Activated T-helper 2 cell treated with anti-CD3 and anti-CD28 coated beads, Interferon-gamma antibody, Interleukin-2, Interleukin-4, amounts not matched to agents 10 μg/mL and 5 μg/mL and 100 μg/mL, durations not matched to agents 14 hours and 24 hours and 36 hours (primary cell): ENCODE measurements at regions of chr1 and their contacts with region 1.

Region 1: DNA sequence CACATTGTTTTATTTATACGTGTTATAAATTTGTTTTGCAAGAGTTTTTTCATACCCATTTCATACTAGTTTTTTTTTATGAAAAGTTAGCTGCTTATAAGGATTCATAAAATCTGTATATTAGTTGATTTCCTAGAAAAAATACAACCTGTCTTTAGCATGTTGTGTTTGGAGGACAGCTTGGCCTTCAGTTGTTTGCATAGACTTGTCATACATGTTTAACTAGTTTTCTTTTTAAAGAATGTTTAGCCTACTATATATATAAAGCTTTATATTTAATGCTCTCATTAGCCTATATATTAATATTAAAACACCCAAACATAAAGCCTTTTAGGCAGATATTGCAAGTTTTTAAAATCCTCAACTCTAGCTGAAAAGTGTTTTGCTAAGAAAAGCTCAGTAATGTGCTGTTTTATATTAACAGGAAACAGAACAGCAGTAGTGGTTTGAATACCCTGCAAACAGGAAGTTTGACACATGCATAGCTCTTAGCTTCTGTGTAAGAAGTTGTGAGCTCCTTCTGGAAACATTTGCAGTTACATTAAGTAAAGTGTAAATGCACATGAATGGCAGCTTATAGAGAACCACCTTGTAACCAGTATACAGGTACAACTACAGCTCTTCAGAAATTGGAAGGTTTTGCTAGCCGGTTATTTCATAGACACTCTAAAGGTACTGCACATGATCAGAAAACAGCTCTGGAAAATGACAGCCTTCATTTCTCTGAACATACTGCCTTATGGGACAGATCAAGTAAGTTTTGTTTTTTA is at the start of gene PRKACB:
- DNase-seq: no peak
- H3K4me3 Mint-ChIP-seq: peak within 1 kb of the TSS; percentile 95
- H3K27ac Mint-ChIP-seq: peak within 1 kb of the TSS; percentile 98
- H3K4me1 Mint-ChIP-seq: peaks cover 36% of the 10 kb centered on the region
- H3K27me3 Mint-ChIP-seq: no peaks in the 10 kb centered on the region
- total RNA-seq, gene PRKACB: 16.4 and 20.9 TPM in 2 replicates

Region 2: GRCh38 chr1:83998498-83999315 is 145.3 kb before region 1 on chr1 and contains the start of gene TTLL7:
- intact Hi-C with region 1: loop called (anchors 2 kb)
- DNase-seq: peak; percentile 63
- H3K4me3 Mint-ChIP-seq: peak within 1 kb of the TSS; percentile 82
- H3K27ac Mint-ChIP-seq: no peak within 1 kb of the TSS
- H3K4me1 Mint-ChIP-seq: peaks cover 17% of the 10 kb centered on the region
- H3K27me3 Mint-ChIP-seq: peaks cover 60% of the 10 kb centered on the region
- total RNA-seq, gene TTLL7: 0.84 and 1.4 TPM in 2 replicates

Region 3: GRCh38 chr1:84090447-84091245 is 53.3 kb before region 1 on chr1:
- intact Hi-C with region 1: no loop called
- DNase-seq: no peak
- H3K4me3 Mint-ChIP-seq: peak overlapping the region; percentile 23
- H3K27ac Mint-ChIP-seq: peak overlapping the region; percentile 43
- H3K4me1 Mint-ChIP-seq: peaks cover 28% of the 10 kb centered on the region
- H3K27me3 Mint-ChIP-seq: no peaks in the 10 kb centered on the region

Region 4: DNA sequence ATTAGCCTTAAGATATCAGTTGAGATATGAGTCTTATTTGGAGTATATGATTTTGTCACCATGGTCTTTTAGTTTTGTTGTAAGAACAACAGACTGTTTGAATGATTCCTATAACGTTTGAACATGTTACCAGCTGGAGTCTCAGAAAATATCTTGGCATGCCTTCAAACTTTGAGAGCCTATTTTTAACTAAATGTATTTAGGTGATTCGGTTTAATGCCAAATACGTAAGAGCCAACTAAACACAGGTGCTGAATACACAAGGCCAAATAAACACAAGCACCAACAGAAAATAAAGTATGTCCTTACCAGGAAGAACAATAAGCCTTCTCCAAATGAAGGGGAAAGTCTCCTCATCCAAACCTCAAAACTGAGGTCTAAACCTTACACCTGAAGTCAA is 48.7 kb after region 1 on chr1:
- intact Hi-C with region 1: loop called (anchors 5 kb)
- DNase-seq: no peak
- H3K4me3 Mint-ChIP-seq: no peak overlapping the region
- H3K27ac Mint-ChIP-seq: no peak overlapping the region
- H3K4me1 Mint-ChIP-seq: no peaks in the 10 kb centered on the region
- H3K27me3 Mint-ChIP-seq: no peaks in the 10 kb centered on the region

Region 5: DNA sequence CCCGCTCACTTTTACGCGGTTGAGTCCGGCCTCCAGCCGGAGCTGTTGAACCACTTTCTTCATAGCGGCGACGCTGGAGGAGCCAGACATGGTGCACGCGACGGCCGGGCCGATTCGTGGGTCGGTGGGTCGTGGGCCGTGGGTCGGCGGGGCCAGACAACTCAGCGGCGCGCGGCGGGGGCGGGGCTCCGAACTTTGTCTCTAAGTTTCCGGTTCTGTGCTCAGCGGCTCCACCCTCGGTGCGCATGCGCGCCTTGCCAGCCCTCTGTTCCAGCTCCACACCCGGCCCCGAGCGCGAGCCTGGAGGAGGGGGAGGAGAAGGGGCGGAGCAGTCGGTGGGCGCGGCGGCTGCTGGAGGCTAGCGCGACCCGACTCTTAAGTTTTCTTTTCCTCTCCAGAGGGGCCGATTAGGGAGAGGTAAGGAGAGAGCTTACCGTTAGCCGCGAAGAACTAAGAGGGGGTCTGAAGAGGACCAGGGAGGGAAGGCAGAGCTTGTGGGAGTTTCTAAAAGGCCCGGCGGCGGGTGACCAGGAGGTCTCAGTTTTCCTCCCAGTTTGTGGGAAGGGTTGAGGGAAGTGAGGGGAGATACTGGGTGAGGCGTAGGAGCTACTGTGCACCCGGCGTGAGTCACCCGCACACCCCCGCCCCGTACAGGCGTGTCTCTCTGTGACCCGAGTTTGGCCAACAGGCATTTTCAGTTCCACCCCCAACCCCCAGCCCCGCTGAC is 362.2 kb after region 1 on chr1 and contains the starts of genes GNG5 and SPATA1:
- intact Hi-C with region 1: loop called (anchors 2 kb)
- DNase-seq: peak; percentile 97
- H3K4me3 Mint-ChIP-seq: peak within 1 kb of the TSS; percentile 100
- H3K27ac Mint-ChIP-seq: peak within 1 kb of the TSS; percentile 99
- H3K4me1 Mint-ChIP-seq: peaks cover 26% of the 10 kb centered on the region
- H3K27me3 Mint-ChIP-seq: no peaks in the 10 kb centered on the region
- total RNA-seq, gene GNG5: 118 and 126 TPM in 2 replicates
- total RNA-seq, gene SPATA1: 1.4 and 1.5 TPM in 2 replicates

Region 6: GRCh38 chr1:84690397-84691121 is 546.6 kb after region 1 on chr1 and contains the start of gene SSX2IP:
- intact Hi-C with region 1: loop called (anchors 1 kb)
- DNase-seq: peak; percentile 98
- H3K4me3 Mint-ChIP-seq: peak within 1 kb of the TSS; percentile 94
- H3K27ac Mint-ChIP-seq: peak within 1 kb of the TSS; percentile 94
- H3K4me1 Mint-ChIP-seq: peaks cover 46% of the 10 kb centered on the region
- H3K27me3 Mint-ChIP-seq: no peaks in the 10 kb centered on the region
- total RNA-seq, gene SSX2IP: 12.1 and 13.0 TPM in 2 replicates

Region 7: GRCh38 chr1:84862810-84863251 is 718.9 kb after region 1 on chr1:
- intact Hi-C with region 1: loop called (anchors 10 kb)
- DNase-seq: peak; percentile 57
- H3K4me3 Mint-ChIP-seq: peak overlapping the region; percentile 46
- H3K27ac Mint-ChIP-seq: peak overlapping the region; percentile 55
- H3K4me1 Mint-ChIP-seq: peaks cover 43% of the 10 kb centered on the region
- H3K27me3 Mint-ChIP-seq: peaks cover 11% of the 10 kb centered on the region